Activated CD4-positive, alpha-beta memory T cell treated with anti-CD3 and anti-CD28 coated beads for 36 hours (primary cell): ENCODE measurements at regions of chr3 and their contacts with region 1.

Region 1: DNA sequence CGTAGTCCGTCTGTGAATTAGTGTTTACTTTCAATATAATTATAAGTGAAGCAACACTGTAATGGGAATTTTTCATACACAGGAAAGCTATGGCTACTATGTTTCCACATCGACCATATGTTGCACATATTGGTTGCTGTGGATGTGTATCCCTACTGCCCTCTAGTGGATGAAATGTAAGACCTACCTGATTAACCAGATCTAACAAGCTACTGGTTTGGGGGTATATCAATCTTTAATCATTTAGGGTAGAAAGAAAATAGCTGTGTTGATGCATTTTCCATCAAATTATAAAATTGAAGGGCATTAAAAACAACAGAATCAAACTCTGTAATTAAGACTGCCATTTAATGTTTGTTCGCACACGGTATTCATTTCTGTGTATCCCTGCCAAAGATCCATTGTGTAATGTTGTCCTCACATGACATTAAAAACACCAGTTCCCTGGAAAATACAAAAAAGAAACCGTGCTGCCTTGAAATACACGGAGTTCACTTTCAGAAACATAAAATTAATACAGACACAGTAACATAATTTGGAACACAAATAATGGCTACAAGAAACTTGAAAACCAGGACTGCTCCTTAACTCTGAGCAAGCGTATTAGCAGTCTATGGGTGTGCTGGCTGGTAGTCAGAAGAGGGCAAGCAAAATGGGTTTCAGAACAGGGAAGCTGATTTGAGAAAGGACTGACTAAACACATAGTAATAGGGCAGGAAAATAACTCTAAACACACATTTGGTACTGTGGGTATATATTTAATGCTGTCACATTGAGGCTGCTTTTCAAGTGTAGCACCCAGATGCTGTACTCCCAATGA is 125.1 kb downstream of the TIGIT start:
- DNase-seq: no peak
- H3K4me3 Mint-ChIP-seq: peak overlapping the region; percentile 54
- H3K27ac Mint-ChIP-seq: peak overlapping the region; percentile 61
- H3K4me1 Mint-ChIP-seq: peaks cover 28% of the 10 kb centered on the region
- H3K27me3 Mint-ChIP-seq: no peaks in the 10 kb centered on the region

Region 2: GRCh38 chr3:114223143-114223542 is 195.8 kb before region 1 on chr3:
- CTCF ChIA-PET with region 1: interaction called, 22 read pairs
- POLR2A ChIA-PET with region 1: no interaction called
- intact Hi-C with region 1: no loop called
- DNase-seq: no peak
- H3K4me3 Mint-ChIP-seq: no peak overlapping the region
- H3K27ac Mint-ChIP-seq: peak overlapping the region; percentile 92
- H3K4me1 Mint-ChIP-seq: peaks cover 90% of the 10 kb centered on the region
- H3K27me3 Mint-ChIP-seq: no peaks in the 10 kb centered on the region

Region 3: DNA sequence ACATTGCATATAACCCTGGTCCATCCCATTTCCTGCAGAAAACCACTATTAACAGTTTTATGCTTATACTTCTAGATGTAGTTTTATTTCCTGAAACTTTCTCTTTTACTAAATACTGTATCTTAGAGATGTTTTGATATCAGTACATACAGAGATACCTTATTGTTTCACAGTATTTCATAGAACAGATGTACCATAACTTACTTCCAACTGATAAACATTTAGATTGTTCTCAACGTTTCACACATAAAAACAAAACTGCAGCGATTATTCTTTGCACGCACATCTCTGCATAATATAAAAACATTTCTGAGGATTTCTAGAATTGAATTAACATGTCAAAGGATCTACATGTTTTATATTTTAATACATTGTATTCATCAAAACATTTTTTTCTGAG is 184.2 kb before region 1 on chr3:
- CTCF ChIA-PET with region 1: no interaction called
- POLR2A ChIA-PET with region 1: no interaction called
- intact Hi-C with region 1: no loop called
- DNase-seq: no peak
- H3K4me3 Mint-ChIP-seq: no peak overlapping the region
- H3K27ac Mint-ChIP-seq: peak overlapping the region; percentile 76
- H3K4me1 Mint-ChIP-seq: peaks cover 66% of the 10 kb centered on the region
- H3K27me3 Mint-ChIP-seq: no peaks in the 10 kb centered on the region

Region 4: GRCh38 chr3:114336122-114336697 is 82.7 kb before region 1 on chr3:
- CTCF ChIA-PET with region 1: no interaction called
- POLR2A ChIA-PET with region 1: no interaction called
- intact Hi-C with region 1: loop called (anchors 1 kb)
- DNase-seq: no peak
- H3K4me3 Mint-ChIP-seq: no peak overlapping the region
- H3K27ac Mint-ChIP-seq: peak overlapping the region; percentile 70
- H3K4me1 Mint-ChIP-seq: peaks cover 75% of the 10 kb centered on the region
- H3K27me3 Mint-ChIP-seq: no peaks in the 10 kb centered on the region

Region 5: GRCh38 chr3:114383875-114384557 is 34.9 kb before region 1 on chr3:
- CTCF ChIA-PET with region 1: interaction called, 125 read pairs
- POLR2A ChIA-PET with region 1: interaction called, 3 read pairs
- intact Hi-C with region 1: loop called (anchors 1 kb)
- DNase-seq: peak; percentile 83
- H3K4me3 Mint-ChIP-seq: peak overlapping the region; percentile 68
- H3K27ac Mint-ChIP-seq: peak overlapping the region; percentile 77
- H3K4me1 Mint-ChIP-seq: peaks cover 6% of the 10 kb centered on the region
- H3K27me3 Mint-ChIP-seq: no peaks in the 10 kb centered on the region

Region 6: DNA sequence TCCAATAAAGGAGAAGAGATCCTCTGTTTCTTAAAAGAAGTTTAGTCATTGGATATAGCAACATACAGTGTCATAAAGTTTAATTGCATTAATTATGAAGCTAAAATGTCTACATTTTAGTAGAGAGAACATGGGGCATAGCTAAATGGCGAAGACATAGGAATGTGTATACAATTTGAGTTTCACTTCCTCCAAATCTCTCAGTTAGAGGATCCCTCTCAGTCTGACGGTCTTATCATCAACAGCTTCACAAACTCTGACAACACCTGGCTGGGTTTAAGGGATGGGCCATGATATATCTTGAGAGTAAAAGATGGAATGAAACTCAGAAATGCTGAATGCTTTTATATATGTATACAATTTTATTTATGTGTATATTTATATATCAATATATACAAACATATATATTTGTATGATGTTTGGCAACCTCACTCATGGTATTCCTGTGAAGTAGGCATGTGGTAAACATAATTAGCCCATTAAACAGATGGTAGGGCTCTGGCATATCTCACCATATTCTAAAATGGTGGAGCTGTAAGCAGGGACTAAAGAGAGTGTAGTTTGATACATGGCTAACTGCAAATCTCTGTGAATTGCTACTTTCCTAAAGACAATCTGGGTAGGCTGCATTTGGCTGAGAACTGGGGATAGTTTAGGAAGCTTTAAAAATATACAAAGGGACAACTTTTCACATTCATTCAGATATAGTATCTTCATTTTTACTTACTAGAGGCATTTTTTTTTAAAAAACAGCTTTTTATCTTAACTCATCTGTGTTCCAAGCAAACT is 13.5 kb before region 1 on chr3:
- CTCF ChIA-PET with region 1: interaction called, 29 read pairs
- POLR2A ChIA-PET with region 1: no interaction called
- intact Hi-C with region 1: no loop called
- DNase-seq: no peak
- H3K4me3 Mint-ChIP-seq: no peak overlapping the region
- H3K27ac Mint-ChIP-seq: no peak overlapping the region
- H3K4me1 Mint-ChIP-seq: peaks cover 4% of the 10 kb centered on the region
- H3K27me3 Mint-ChIP-seq: no peaks in the 10 kb centered on the region

Region 7: DNA sequence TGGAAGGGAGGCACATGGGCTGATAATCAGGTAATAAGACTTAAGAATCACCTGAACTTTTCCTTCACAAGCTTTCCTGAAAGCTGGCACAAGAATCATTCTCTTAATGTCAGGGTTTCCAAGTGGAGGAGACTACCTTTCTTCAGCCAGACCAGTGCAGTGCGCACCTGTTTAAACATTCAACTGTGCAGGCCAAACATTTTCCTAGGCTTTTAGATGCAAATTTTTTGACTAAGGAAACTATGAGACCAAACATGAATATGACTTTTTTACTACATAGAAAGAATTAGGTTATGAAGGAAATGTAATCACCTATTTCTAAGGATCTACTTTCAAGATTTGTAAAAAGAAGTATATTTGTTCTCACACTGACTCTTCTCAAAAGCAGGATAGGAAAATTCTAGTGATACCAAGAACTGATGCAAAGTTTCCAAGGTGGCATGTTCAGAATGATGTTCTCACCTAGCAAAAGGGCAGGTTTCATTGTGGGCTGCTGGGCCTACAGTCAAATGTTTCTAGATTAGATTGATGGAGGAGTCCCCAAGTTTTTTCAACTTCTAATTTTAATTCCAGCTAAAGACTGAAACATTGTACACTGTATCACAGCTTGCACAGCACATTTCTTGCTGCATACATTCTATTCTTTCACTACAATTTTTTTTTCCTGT is 214.0 kb after region 1 on chr3:
- CTCF ChIA-PET with region 1: no interaction called
- POLR2A ChIA-PET with region 1: no interaction called
- intact Hi-C with region 1: loop called (anchors 1 kb)
- DNase-seq: peak; percentile 52
- H3K4me3 Mint-ChIP-seq: no peak overlapping the region
- H3K27ac Mint-ChIP-seq: peak overlapping the region; percentile 64
- H3K4me1 Mint-ChIP-seq: peaks cover 10% of the 10 kb centered on the region
- H3K27me3 Mint-ChIP-seq: no peaks in the 10 kb centered on the region